ENCODE measurements at regions of chr2 and their contacts with region 1.

Region 1: DNA sequence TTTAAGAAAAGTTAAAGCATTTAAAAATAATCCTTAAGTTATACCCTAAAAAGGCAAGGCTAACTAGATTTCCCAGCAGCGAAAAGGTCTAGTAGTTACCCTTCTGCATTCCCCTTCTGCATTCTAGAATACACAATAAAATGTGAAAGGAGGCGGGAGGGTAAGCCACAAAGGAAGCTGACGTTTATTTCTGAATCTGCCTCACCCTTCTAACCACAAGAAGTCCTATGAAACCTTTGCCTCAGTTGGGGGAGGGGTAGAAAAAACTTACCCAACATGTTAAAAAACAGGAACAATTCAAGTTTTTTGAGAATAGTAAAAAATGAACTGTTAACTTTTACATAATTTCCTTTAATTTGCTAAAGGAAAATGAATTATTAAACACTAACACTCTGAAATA is 11.3 kb downstream of the STK17B start:
- DNase-seq: peak; percentile 86 to 90 (median 87)
- H3K4me3 ChIP-seq: peak overlapping the region in 1 of 2 donors; percentile 1
- H3K4me3 Mint-ChIP-seq: peak overlapping the region; percentile 62 to 90 (median 78)
- H3K27ac ChIP-seq: peak overlapping the region; percentile 95
- H3K27ac Mint-ChIP-seq: peak overlapping the region; percentile 92 to 98 (median 96)
- H3K4me1 ChIP-seq: peaks cover 96% of the 10 kb centered on the region
- H3K4me1 Mint-ChIP-seq: peaks cover 38 to 93% (median 59%) of the 10 kb centered on the region in 4 donors
- H3K27me3 ChIP-seq: no peaks in the 10 kb centered on the region
- H3K27me3 Mint-ChIP-seq: no peaks in the 10 kb centered on the region

Region 2: GRCh38 chr2:196076778-196077568 is 83.1 kb before region 1 on chr2:
- CTCF ChIA-PET with region 1: interaction called, 30 read pairs
- POLR2A ChIA-PET with region 1: interaction called, 12 read pairs
- intact Hi-C with region 1: no loop called
- DNase-seq: no peak
- H3K4me3 ChIP-seq: no peak overlapping the region
- H3K4me3 Mint-ChIP-seq: no peak overlapping the region
- H3K27ac ChIP-seq: no peak overlapping the region
- H3K27ac Mint-ChIP-seq: no peak overlapping the region
- H3K4me1 ChIP-seq: peaks cover 25% of the 10 kb centered on the region
- H3K4me1 Mint-ChIP-seq: peaks cover 14 to 22% (median 16%) of the 10 kb centered on the region in 4 donors
- H3K27me3 ChIP-seq: no peaks in the 10 kb centered on the region
- H3K27me3 Mint-ChIP-seq: no peaks in the 10 kb centered on the region

Region 3: GRCh38 chr2:196143730-196144131 is 16.4 kb before region 1 on chr2:
- CTCF ChIA-PET with region 1: interaction called, 7 read pairs
- POLR2A ChIA-PET with region 1: interaction called, 74 read pairs
- intact Hi-C with region 1: loop called (anchors 1 kb)
- DNase-seq: no peak
- H3K4me3 ChIP-seq: no peak overlapping the region
- H3K4me3 Mint-ChIP-seq: peak overlapping the region in 5 of 8 donors; percentile 13 to 74 (median 59)
- H3K27ac ChIP-seq: no peak overlapping the region
- H3K27ac Mint-ChIP-seq: peak overlapping the region; percentile 44 to 89 (median 81)
- H3K4me1 ChIP-seq: peaks cover 72% of the 10 kb centered on the region
- H3K4me1 Mint-ChIP-seq: peaks cover 41 to 77% (median 60%) of the 10 kb centered on the region in 4 donors
- H3K27me3 ChIP-seq: no peaks in the 10 kb centered on the region
- H3K27me3 Mint-ChIP-seq: no peaks in the 10 kb centered on the region

Region 4: GRCh38 chr2:196182439-196183171 is 22.5 kb after region 1 on chr2:
- CTCF ChIA-PET with region 1: interaction called, 6 read pairs
- POLR2A ChIA-PET with region 1: interaction called, 194 read pairs
- intact Hi-C with region 1: loop called (anchors 2 kb)
- DNase-seq: peak in 1 of 5 donors; percentile 53
- H3K4me3 ChIP-seq: peak overlapping the region; percentile 2 to 7
- H3K4me3 Mint-ChIP-seq: peak overlapping the region; percentile 64 to 85 (median 74)
- H3K27ac ChIP-seq: peak overlapping the region; percentile 55
- H3K27ac Mint-ChIP-seq: peak overlapping the region; percentile 91 to 98 (median 95)
- H3K4me1 ChIP-seq: peaks cover 92% of the 10 kb centered on the region
- H3K4me1 Mint-ChIP-seq: peaks cover 65 to 93% (median 80%) of the 10 kb centered on the region in 4 donors
- H3K27me3 ChIP-seq: no peaks in the 10 kb centered on the region
- H3K27me3 Mint-ChIP-seq: no peaks in the 10 kb centered on the region

Region 5: GRCh38 chr2:196205881-196206435 is 45.9 kb after region 1 on chr2:
- CTCF ChIA-PET with region 1: interaction called, 3 read pairs
- POLR2A ChIA-PET with region 1: interaction called, 94 read pairs
- intact Hi-C with region 1: loop called (anchors 1 kb)
- DNase-seq: no peak
- H3K4me3 ChIP-seq: no peak overlapping the region
- H3K4me3 Mint-ChIP-seq: no peak overlapping the region
- H3K27ac ChIP-seq: no peak overlapping the region
- H3K27ac Mint-ChIP-seq: peak overlapping the region in 3 of 7 donors; percentile 14 to 85 (median 24)
- H3K4me1 ChIP-seq: peaks cover 53% of the 10 kb centered on the region
- H3K4me1 Mint-ChIP-seq: peaks cover 46 to 55% (median 49%) of the 10 kb centered on the region in 4 donors
- H3K27me3 ChIP-seq: no peaks in the 10 kb centered on the region
- H3K27me3 Mint-ChIP-seq: no peaks in the 10 kb centered on the region

Region 6: GRCh38 chr2:196233021-196233804 is 73.1 kb after region 1 on chr2:
- CTCF ChIA-PET with region 1: interaction called, 4 read pairs
- POLR2A ChIA-PET with region 1: interaction called, 62 read pairs
- intact Hi-C with region 1: no loop called
- DNase-seq: no peak
- H3K4me3 ChIP-seq: no peak overlapping the region
- H3K4me3 Mint-ChIP-seq: peak overlapping the region in 6 of 8 donors; percentile 21 to 41 (median 32)
- H3K27ac ChIP-seq: peak overlapping the region; percentile 33
- H3K27ac Mint-ChIP-seq: peak overlapping the region; percentile 83 to 99 (median 93)
- H3K4me1 ChIP-seq: peaks cover 96% of the 10 kb centered on the region
- H3K4me1 Mint-ChIP-seq: peaks cover 65 to 97% (median 79%) of the 10 kb centered on the region in 4 donors
- H3K27me3 ChIP-seq: no peaks in the 10 kb centered on the region
- H3K27me3 Mint-ChIP-seq: no peaks in the 10 kb centered on the region

Region 7: GRCh38 chr2:196263181-196263747 is 103.2 kb after region 1 on chr2:
- CTCF ChIA-PET with region 1: interaction called, 7 read pairs
- POLR2A ChIA-PET with region 1: interaction called, 7 read pairs
- intact Hi-C with region 1: loop called (anchors 2 kb)
- DNase-seq: peak; percentile 72 to 82 (median 78)
- H3K4me3 ChIP-seq: peak overlapping the region in 1 of 2 donors; percentile 33
- H3K4me3 Mint-ChIP-seq: peak overlapping the region; percentile 63 to 91 (median 79)
- H3K27ac ChIP-seq: peak overlapping the region; percentile 78
- H3K27ac Mint-ChIP-seq: peak overlapping the region; percentile 85 to 99 (median 97)
- H3K4me1 ChIP-seq: peaks cover 93% of the 10 kb centered on the region
- H3K4me1 Mint-ChIP-seq: peaks cover 59 to 83% (median 71%) of the 10 kb centered on the region in 4 donors
- H3K27me3 ChIP-seq: no peaks in the 10 kb centered on the region
- H3K27me3 Mint-ChIP-seq: no peaks in the 10 kb centered on the region

Region 8: GRCh38 chr2:197388866-197389587 is 1228.9 kb after region 1 on chr2:
- CTCF ChIA-PET with region 1: no interaction called
- POLR2A ChIA-PET with region 1: no interaction called
- intact Hi-C with region 1: no loop called
- DNase-seq: no peak
- H3K4me3 ChIP-seq: no peak overlapping the region
- H3K4me3 Mint-ChIP-seq: no peak overlapping the region
- H3K27ac ChIP-seq: no peak overlapping the region
- H3K27ac Mint-ChIP-seq: peak overlapping the region in 3 of 7 donors; percentile 2 to 83 (median 57)
- H3K4me1 ChIP-seq: peaks cover under 1% of the 10 kb centered on the region
- H3K4me1 Mint-ChIP-seq: peaks cover 9 to 11% (median 11%) of the 10 kb centered on the region in 4 donors
- H3K27me3 ChIP-seq: no peaks in the 10 kb centered on the region
- H3K27me3 Mint-ChIP-seq: no peaks in the 10 kb centered on the region

Region 9: GRCh38 chr2:197560146-197560665 is 1400.1 kb after region 1 on chr2:
- CTCF ChIA-PET with region 1: no interaction called
- POLR2A ChIA-PET with region 1: no interaction called
- intact Hi-C with region 1: no loop called
- DNase-seq: no peak
- H3K4me3 ChIP-seq: no peak overlapping the region
- H3K4me3 Mint-ChIP-seq: no peak overlapping the region
- H3K27ac ChIP-seq: no peak overlapping the region
- H3K27ac Mint-ChIP-seq: peak overlapping the region in 1 of 7 donors; percentile 61
- H3K4me1 ChIP-seq: no peaks in the 10 kb centered on the region
- H3K4me1 Mint-ChIP-seq: peaks cover 2 to 13% (median 3%) of the 10 kb centered on the region in 4 donors
- H3K27me3 ChIP-seq: no peaks in the 10 kb centered on the region
- H3K27me3 Mint-ChIP-seq: no peaks in the 10 kb centered on the region

Measured in CD4-positive, alpha-beta memory T cell (primary cell).